ENCODE measurements at regions of chr2 and their contacts with region 1.

Region 1: DNA sequence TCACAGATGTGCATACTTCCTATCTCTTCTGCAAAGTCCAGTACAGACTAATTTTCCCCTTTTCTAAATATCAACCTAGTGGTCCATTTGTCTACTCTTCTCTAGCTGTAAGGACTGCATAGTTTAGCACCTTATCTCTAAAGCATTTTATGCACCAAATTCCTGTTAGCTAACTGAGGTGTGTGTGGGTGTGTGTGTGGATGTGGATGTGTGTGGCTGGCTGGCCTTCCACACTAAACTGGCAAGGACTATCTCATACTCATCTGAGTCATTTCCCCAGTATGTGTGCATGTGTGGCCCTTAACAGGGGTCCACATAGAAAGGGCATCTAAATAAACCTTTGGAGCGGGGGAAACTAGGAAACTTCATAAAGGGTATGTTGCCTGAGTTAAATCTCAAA is 139.6 kb downstream of the TTC32 start:
- DNase-seq: no peak
- H3K4me3 ChIP-seq: no peak overlapping the region
- H3K27ac ChIP-seq: no peak overlapping the region
- H3K4me1 ChIP-seq: no peaks in the 10 kb centered on the region
- H3K27me3 ChIP-seq: no peaks in the 10 kb centered on the region
- CTCF ChIP-seq: no peak
- EP300 ChIP-seq: no peak
- POLR2A ChIP-seq: no peak
- RAD21 ChIP-seq: no peak

Region 2: GRCh38 chr2:19772981-19773380 is 10.8 kb after region 1 on chr2:
- CTCF ChIA-PET with region 1: interaction called, 11 read pairs
- POLR2A ChIA-PET with region 1: interaction called, 3 read pairs
- DNase-seq: no peak
- H3K4me3 ChIP-seq: no peak overlapping the region
- H3K27ac ChIP-seq: no peak overlapping the region
- H3K4me1 ChIP-seq: peaks cover 7 to 12% (median 9%) of the 10 kb centered on the region in 4 experiments; a peak in 6 of 7 replicates
- H3K27me3 ChIP-seq: no peaks in the 10 kb centered on the region
- CTCF ChIP-seq: no peak
- EP300 ChIP-seq: no peak
- POLR2A ChIP-seq: no peak
- RAD21 ChIP-seq: no peak